ENCODE measurements at regions of chr11 and their contacts with region 1.

Region 1: GRCh38 chr11:111454561-111455192 is 57.5 kb downstream of the BTG4 start:
- DNase-seq: peak; percentile 83
- H3K4me3 Mint-ChIP-seq: no peak overlapping the region
- H3K27ac Mint-ChIP-seq: peak overlapping the region; percentile 21
- H3K4me1 Mint-ChIP-seq: no peaks in the 10 kb centered on the region
- H3K27me3 Mint-ChIP-seq: peaks cover 15% of the 10 kb centered on the region

Region 2: GRCh38 chr11:111299101-111300026 is 155.3 kb before region 1 on chr11:
- intact Hi-C with region 1: no loop called
- DNase-seq: peak; percentile 54
- H3K4me3 Mint-ChIP-seq: peak overlapping the region; percentile 44
- H3K27ac Mint-ChIP-seq: no peak overlapping the region
- H3K4me1 Mint-ChIP-seq: peaks cover 4% of the 10 kb centered on the region
- H3K27me3 Mint-ChIP-seq: peaks cover 49% of the 10 kb centered on the region

Region 3: DNA sequence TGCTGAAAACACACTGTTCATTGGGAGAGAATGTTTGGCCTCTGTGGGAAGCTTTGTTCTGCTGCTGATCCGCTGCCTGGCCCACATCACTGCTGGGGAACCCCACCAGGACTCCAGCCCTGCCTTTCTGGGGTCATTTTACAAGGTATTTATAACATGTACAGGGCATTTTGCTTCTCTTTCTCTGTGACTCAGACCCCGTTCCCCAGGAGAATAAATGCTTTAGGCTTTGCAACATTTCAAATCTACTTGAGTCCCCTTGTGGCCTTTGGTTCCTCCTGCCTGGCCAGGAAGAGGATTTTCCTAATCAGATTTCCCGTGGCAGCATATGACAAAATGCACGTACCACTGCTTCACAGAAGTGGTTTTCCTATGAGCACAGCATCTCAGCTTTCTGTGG is 14.5 kb after region 1 on chr11:
- intact Hi-C with region 1: no loop called
- DNase-seq: peak; percentile 51
- H3K4me3 Mint-ChIP-seq: no peak overlapping the region
- H3K27ac Mint-ChIP-seq: no peak overlapping the region
- H3K4me1 Mint-ChIP-seq: peaks cover 6% of the 10 kb centered on the region
- H3K27me3 Mint-ChIP-seq: peaks cover 10% of the 10 kb centered on the region

Region 4: DNA sequence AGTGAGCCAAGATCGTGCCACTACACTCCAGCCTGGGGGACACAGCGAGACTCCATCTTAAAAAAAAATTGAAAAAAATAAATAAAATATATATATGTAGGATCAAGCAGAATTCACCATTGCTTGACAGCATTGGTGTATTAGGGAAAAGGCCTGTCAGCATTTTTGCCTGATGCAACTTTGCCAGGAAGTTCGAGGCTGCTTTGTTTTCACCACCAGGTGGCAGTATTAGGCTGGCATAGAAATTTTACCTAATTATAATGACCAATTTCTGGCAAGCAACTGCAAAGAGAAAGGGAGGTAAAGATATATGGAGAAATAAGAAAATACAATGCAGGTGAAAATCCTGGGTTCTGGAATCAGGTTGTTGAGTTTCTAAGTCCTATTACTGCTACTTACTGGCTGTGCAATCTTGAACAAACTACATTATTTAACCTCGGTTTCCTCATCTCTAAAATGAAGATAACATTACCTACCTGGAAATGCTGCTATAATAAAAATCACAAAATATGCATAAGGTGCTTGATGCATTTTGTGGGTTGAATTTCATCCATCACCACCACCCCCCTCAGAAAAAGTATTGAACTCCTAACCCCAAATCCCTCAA is 110.5 kb after region 1 on chr11:
- intact Hi-C with region 1: loop called (anchors 5 kb)
- DNase-seq: peak; percentile 89
- H3K4me3 Mint-ChIP-seq: no peak overlapping the region
- H3K27ac Mint-ChIP-seq: no peak overlapping the region
- H3K4me1 Mint-ChIP-seq: no peaks in the 10 kb centered on the region
- H3K27me3 Mint-ChIP-seq: no peaks in the 10 kb centered on the region